Activated CD4-positive, alpha-beta T cell treated with anti-CD3 and anti-CD28 coated beads for 36 hours (primary cell): ENCODE measurements at regions of chr2 and their contacts with region 1.

Region 1: DNA sequence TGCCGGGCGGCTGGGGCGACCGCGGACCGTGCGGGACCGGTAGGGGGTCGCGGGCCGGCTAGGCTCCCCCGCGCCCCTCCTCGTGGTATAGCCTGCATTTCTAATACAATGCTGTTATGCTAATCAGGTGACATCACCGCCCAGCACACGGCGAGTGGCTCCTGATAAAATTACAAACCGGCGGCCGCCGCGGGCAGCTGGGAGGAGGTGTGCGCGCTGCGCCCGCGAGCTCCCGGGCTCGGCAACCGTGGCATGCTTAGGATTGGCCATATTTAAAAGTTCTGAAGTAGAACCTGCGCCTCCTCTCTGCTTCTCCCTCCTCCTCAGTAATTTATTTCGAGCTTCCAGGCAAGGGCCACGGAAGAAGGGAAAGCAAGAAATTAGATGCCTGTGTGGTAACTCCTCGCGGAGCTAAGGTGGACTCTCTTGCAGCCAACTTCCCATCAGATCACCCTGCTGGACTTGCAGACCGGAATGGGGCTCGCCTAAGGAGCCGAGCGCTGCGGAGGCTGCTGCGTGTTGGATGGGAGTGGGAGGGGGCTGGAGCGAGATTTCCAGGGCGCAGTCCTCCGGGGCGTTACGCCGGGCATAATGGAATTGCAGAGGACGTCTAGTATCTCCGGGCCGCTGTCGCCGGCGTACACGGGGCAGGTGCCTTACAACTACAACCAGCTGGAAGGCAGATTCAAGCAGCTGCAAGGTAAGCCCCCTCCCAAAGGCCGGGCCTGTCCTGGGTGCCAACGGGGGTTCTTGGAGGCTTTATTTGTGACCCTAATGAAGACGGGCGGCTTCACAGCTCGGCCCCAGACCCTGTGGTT is 102.3 kb downstream of the SPTBN1 start:
- DNase-seq: peak; percentile 86
- ATAC-seq: peak; percentile 54
- H3K4me3 Mint-ChIP-seq: peak overlapping the region; percentile 91
- H3K27ac Mint-ChIP-seq: peak overlapping the region; percentile 94
- H3K4me1 Mint-ChIP-seq: peaks cover 43% of the 10 kb centered on the region
- H3K27me3 Mint-ChIP-seq: no peaks in the 10 kb centered on the region

Region 2: GRCh38 chr2:53840580-53840979 is 717.8 kb before region 1 on chr2:
- CTCF ChIA-PET with region 1: no interaction called
- POLR2A ChIA-PET with region 1: no interaction called
- intact Hi-C with region 1: no loop called
- DNase-seq: no peak
- ATAC-seq: no peak
- H3K4me3 Mint-ChIP-seq: no peak overlapping the region
- H3K27ac Mint-ChIP-seq: no peak overlapping the region
- H3K4me1 Mint-ChIP-seq: peaks cover 4% of the 10 kb centered on the region
- H3K27me3 Mint-ChIP-seq: no peaks in the 10 kb centered on the region

Region 3: GRCh38 chr2:54570925-54571694 is 12.7 kb after region 1 on chr2:
- CTCF ChIA-PET with region 1: interaction called, 29 read pairs
- POLR2A ChIA-PET with region 1: interaction called, 29 read pairs
- intact Hi-C with region 1: loop called (anchors 1 kb)
- DNase-seq: peak; percentile 90
- ATAC-seq: peak; percentile 50
- H3K4me3 Mint-ChIP-seq: peak overlapping the region; percentile 65
- H3K27ac Mint-ChIP-seq: peak overlapping the region; percentile 99
- H3K4me1 Mint-ChIP-seq: peaks cover 90% of the 10 kb centered on the region
- H3K27me3 Mint-ChIP-seq: no peaks in the 10 kb centered on the region

Region 4: DNA sequence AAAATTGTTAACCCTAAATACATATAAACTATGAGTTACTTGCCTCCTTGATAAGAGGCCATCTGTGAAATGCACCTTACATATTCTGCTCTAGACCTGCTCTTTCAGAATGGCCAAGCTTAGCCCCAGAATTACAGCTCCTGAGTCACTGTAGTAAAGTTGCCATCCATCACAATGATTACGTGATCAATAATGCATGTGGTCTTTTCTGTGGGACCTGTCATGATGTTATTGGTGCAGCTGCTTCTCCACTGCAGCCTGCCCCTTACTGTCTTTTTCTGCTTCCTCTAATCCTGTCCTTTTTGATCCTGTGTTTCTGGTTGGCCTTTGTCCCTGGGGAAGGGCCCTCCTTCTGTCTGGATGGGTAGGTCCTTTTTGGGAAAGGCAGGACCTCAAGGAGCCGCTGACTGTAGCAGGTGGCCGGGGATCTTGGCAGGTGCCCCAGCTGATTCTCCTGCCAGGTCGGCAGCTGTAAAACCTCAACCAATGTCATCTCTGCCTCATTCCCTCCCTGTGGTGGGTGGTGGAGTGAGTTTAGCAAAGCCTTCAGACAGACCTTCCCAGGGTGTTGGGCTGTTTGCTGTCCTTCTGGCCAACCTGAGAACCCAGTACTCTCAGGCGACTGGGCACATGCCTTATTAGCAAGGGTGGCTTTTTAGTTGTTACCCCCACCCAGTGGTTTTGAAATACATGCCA is 38.9 kb after region 1 on chr2:
- CTCF ChIA-PET with region 1: interaction called, 6 read pairs
- POLR2A ChIA-PET with region 1: interaction called, 3 read pairs
- intact Hi-C with region 1: loop called (anchors 2 kb)
- DNase-seq: peak; percentile 61
- ATAC-seq: peak; percentile 48
- H3K4me3 Mint-ChIP-seq: peak overlapping the region; percentile 64
- H3K27ac Mint-ChIP-seq: peak overlapping the region; percentile 96
- H3K4me1 Mint-ChIP-seq: peaks cover 86% of the 10 kb centered on the region
- H3K27me3 Mint-ChIP-seq: no peaks in the 10 kb centered on the region

Region 5: DNA sequence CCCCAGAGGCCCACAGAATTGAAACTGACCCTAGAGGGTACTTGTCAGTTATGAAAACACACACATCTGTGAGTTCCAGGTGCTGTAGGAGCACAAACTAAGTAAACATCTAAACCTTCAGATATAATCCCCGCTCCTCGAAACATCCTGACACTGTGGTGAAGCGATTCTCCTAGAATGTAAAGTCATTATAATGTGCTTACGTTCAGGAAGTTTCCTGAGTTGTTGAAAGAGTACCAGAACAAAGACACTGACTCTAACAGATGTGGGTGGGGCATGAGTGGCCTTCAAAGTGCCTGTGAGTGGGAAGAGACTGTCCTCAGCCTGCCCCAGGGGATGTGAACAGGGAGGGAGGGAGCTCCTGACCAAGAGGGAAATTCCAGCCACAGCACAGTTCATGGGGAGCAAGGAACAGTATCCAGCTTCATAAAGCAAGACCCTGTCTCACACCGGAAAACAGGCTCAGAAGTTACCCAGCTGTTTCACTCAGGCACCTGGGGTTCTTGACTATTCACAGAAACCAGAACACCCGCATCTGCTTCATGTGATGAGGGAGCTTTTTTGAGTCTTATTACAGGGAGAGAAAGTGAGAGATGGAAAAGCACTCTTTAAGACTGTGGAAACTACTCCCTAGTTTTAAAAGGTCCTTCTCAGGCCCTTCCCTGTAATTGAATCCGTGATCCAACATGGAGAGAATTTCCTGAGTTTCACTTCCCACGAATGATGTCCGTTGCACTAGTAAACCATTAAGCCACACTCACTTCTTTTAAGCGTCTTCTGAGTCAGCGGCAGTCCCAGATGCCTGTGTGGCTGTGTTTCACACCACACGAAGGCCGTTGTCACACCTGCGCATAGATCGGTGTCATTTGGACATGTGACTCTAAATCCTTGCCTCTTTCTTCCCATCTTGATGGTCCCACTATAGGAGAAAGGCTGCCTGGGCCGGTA is 76.4 kb after region 1 on chr2:
- CTCF ChIA-PET with region 1: no interaction called
- POLR2A ChIA-PET with region 1: no interaction called
- intact Hi-C with region 1: no loop called
- DNase-seq: peak; percentile 27
- ATAC-seq: peak; percentile 66
- H3K4me3 Mint-ChIP-seq: no peak overlapping the region
- H3K27ac Mint-ChIP-seq: peak overlapping the region; percentile 70
- H3K4me1 Mint-ChIP-seq: peaks cover 31% of the 10 kb centered on the region
- H3K27me3 Mint-ChIP-seq: no peaks in the 10 kb centered on the region

Region 6: GRCh38 chr2:54680397-54681041 is 122.1 kb after region 1 on chr2:
- CTCF ChIA-PET with region 1: interaction called, 3 read pairs
- POLR2A ChIA-PET with region 1: no interaction called
- intact Hi-C with region 1: loop called in 1 of 2 experiments (anchors 1 kb)
- DNase-seq: peak; percentile 69
- ATAC-seq: peak; percentile 95
- H3K4me3 Mint-ChIP-seq: no peak overlapping the region
- H3K27ac Mint-ChIP-seq: peak overlapping the region; percentile 72
- H3K4me1 Mint-ChIP-seq: peaks cover 22% of the 10 kb centered on the region
- H3K27me3 Mint-ChIP-seq: peaks cover 61% of the 10 kb centered on the region

Region 7: DNA sequence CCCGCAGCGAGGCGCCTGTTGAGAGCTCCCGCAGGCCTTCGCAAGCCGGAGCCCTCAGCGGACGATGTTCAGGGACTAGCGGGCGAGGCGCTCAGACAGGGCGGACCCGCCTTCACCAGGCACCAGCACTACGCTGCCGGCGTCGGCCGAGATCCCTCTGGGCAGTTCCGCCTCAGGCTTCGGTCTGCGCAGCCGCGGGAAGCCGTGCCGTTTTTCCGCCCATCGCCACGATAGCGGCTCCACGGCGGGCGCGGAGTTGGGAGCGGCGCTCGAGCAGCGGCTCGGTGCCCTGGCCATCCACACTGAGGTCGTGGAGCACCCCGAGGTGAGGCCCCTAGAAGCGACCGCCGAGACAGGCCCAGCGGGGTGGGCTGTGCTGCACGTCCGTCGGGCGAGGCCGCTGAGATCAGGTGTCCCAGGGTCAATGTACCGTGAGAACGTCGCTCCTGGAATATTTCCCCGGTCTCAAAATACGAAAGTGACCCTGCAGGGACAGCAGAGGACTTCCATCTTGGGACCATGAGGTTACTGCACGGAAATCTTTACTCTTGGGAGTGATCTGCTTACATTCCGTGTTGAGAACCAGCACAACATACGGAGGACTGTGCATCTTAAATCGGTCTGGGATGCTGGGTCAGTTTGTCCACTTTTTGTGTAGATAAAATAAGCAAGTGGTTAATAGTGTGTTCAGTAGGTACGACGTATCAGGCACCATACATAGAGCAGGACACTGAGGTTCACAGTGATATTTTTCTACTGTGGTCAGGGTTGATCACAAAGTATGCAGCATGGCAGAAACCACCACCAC is 723.9 kb after region 1 on chr2:
- CTCF ChIA-PET with region 1: no interaction called
- POLR2A ChIA-PET with region 1: no interaction called
- intact Hi-C with region 1: loop called in 1 of 2 experiments (anchors 5 kb)
- DNase-seq: peak; percentile 91
- ATAC-seq: peak; percentile 99
- H3K4me3 Mint-ChIP-seq: peak overlapping the region; percentile 86
- H3K27ac Mint-ChIP-seq: peak overlapping the region; percentile 94
- H3K4me1 Mint-ChIP-seq: peaks cover 14% of the 10 kb centered on the region
- H3K27me3 Mint-ChIP-seq: no peaks in the 10 kb centered on the region